PC-3 (cell line): ENCODE measurements at regions of chr9 and their contacts with region 1.

Region 1: GRCh38 chr9:36166101-36166927 is 2.9 kb upstream of the CCIN start:
- DNase-seq: peak; percentile 83
- ATAC-seq: peak; percentile 83
- H3K4me3 ChIP-seq: peak overlapping the region; percentile 81
- H3K27ac ChIP-seq: no peak overlapping the region
- H3K4me1 ChIP-seq: peaks cover 13% of the 10 kb centered on the region
- H3K27me3 ChIP-seq: no peaks in the 10 kb centered on the region
- CTCF ChIP-seq: peak; percentile 79

Region 2: DNA sequence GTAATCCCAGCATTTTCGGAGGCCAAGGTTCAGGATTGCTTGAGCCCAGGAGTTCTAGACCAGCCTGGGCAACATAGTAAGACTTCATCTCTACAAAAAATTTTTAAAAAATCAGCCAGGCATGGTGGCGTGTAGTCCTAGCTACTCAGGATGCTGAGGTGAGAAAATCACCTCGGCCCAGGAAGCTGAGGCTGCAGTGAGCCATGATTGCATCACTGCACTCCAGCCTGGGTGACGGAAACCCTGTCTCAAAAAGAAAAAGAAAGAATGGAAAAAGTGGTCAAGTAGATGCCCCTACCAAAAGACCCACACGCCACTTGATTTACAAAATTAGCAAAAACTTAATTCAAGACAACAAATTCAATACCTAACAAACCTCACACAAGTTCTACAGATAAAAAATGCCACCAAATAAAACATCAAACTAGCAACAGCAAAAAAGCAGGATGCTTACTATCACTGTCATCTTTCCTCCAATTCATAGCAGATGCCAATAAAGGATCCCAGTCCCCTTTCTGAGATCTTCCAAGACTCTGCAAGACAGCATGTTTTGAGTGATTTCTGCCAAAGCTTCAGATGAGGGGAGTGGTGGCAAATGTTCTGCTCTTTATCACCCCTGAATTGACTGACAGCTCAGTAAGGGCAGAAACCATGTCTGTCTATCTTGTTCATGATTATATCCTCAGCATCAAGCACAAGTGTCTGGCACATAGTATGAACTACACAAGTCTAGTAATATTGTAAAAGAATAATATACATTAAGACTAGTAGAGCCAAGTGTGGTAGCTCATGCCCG is 595.4 kb before region 1 on chr9:
- CTCF ChIA-PET with region 1: no interaction called
- POLR2A ChIA-PET with region 1: no interaction called
- intact Hi-C with region 1: no loop called
- DNase-seq: no peak
- ATAC-seq: no peak
- H3K4me3 ChIP-seq: no peak overlapping the region
- H3K27ac ChIP-seq: no peak overlapping the region
- H3K4me1 ChIP-seq: no peaks in the 10 kb centered on the region
- H3K27me3 ChIP-seq: no peaks in the 10 kb centered on the region
- CTCF ChIP-seq: no peak

Region 3: DNA sequence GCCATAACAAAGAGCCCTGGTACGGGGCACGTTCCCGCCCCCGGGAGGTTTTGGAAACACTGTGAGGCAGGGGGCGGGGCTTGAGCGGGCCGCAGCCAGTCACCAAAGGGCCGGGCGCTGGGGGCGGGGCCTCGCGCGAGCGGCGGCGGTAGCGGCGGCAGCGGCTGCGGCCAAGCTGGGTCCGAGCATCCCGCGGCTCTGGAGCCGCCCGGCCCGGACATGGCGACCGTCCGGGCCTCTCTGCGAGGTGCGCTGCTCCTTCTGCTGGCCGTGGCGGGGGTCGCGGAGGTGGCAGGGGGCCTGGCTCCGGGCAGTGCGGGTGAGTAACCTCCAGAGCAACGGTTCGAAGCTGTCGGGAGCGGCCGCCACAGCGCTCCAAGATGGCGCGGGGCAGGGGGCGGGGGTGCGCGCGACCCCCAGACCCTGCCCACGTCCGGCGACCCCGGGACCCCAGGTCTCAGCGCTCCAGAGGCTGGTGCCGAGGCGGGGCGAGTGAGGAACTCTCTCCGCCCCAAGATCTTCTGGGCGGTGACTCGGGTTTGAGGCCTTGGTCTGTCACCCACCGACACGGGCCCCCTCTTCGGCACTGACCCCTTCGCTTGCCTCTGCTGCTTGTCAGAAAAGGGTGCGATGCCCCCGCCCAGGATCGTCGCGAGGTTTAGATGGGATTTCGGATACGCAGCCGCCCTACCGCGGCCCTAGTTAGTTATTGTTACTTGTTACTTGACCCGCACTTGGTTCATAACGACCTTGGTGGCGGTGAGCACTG is 129.3 kb before region 1 on chr9 and contains the start of gene RECK:
- CTCF ChIA-PET with region 1: interaction called, 17 read pairs
- POLR2A ChIA-PET with region 1: no interaction called
- intact Hi-C with region 1: no loop called
- DNase-seq: peak; percentile 69
- ATAC-seq: peak; percentile 94
- H3K4me3 ChIP-seq: peak within 1 kb of the TSS; percentile 94
- H3K27ac ChIP-seq: no peak within 1 kb of the TSS
- H3K4me1 ChIP-seq: peaks cover 21% of the 10 kb centered on the region
- H3K27me3 ChIP-seq: no peaks in the 10 kb centered on the region
- CTCF ChIP-seq: no peak
- total RNA-seq, gene RECK: 3.8 and 5.0 TPM in 2 replicates

Region 4: GRCh38 chr9:36102742-36103495 is 63.4 kb before region 1 on chr9:
- CTCF ChIA-PET with region 1: interaction called, 4 read pairs
- POLR2A ChIA-PET with region 1: no interaction called
- intact Hi-C with region 1: loop called (anchors 2 kb)
- DNase-seq: peak; percentile 67
- ATAC-seq: peak; percentile 74
- H3K4me3 ChIP-seq: no peak overlapping the region
- H3K27ac ChIP-seq: peak overlapping the region; percentile 18; the same call in 1 of the 2 replicates
- H3K4me1 ChIP-seq: peaks cover 10% of the 10 kb centered on the region
- H3K27me3 ChIP-seq: no peaks in the 10 kb centered on the region
- CTCF ChIP-seq: peak; percentile 79

Region 5: DNA sequence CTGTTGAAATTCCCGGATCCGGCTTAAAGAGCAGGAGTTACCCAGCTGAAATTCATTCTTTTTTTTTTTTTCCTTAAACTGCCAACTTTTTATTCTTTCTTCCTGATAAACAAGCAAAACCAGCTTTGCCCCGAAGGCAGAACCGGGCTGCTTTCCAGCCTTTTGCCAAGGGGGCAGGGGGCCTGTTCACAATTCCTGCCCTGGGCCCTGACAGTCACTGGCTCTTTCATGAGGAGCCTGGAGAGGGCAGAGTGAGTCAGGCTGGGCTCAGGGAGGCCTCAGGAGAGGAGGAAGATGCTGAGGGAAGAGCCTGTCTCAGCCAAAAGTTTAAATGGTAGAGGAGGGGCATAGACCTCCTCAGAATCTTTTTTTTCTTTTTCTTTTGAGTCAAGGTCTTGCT is 25.0 kb before region 1 on chr9:
- CTCF ChIA-PET with region 1: interaction called, 10 read pairs
- POLR2A ChIA-PET with region 1: no interaction called
- intact Hi-C with region 1: no loop called
- DNase-seq: peak; percentile 79
- ATAC-seq: peak; percentile 69
- H3K4me3 ChIP-seq: peak overlapping the region; percentile 11; the same call in 1 of the 2 replicates
- H3K27ac ChIP-seq: peak overlapping the region; percentile 33; the same call in 1 of the 2 replicates
- H3K4me1 ChIP-seq: peaks cover 18% of the 10 kb centered on the region
- H3K27me3 ChIP-seq: no peaks in the 10 kb centered on the region
- CTCF ChIP-seq: peak; percentile 54

Region 6: DNA sequence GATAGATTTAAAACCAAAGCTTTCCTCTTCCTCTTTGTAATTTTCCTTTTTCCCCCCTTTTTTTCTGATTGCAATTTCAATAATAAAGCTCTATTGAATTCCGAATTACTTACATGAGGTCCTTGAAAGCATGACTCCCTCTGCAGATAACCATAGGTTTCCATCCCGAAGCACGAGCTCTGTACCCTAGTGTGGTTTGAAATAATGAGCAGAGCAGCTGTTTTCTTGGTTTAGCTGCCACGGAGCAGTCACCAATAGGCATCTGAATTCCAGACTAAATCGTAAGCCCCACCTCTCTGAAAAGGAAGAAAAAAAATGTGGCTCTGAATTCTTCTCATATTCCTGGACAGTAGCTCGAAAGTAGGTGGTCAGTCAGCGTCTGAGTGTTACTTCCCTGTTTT is 110.5 kb after region 1 on chr9:
- CTCF ChIA-PET with region 1: no interaction called
- POLR2A ChIA-PET with region 1: no interaction called
- intact Hi-C with region 1: no loop called
- DNase-seq: no peak
- ATAC-seq: no peak
- H3K4me3 ChIP-seq: no peak overlapping the region
- H3K27ac ChIP-seq: no peak overlapping the region
- H3K4me1 ChIP-seq: peaks cover 3% of the 10 kb centered on the region; the same call in 1 of the 2 replicates
- H3K27me3 ChIP-seq: no peaks in the 10 kb centered on the region
- CTCF ChIP-seq: no peak